Sigmoid colon (tissue), 7 donors: ENCODE measurements at regions of chr15 and their contacts with region 1.

Region 1: GRCh38 chr15:79028411-79028964 is 62.1 kb downstream of the RASGRF1 start:
- DNase-seq: no peak
- H3K4me3 ChIP-seq: no peak overlapping the region
- H3K27ac ChIP-seq: no peak overlapping the region
- H3K4me1 ChIP-seq: no peaks in the 10 kb centered on the region
- H3K27me3 ChIP-seq: peaks cover 0 to 6% (median 0%) of the 10 kb centered on the region in 3 donors
- CTCF ChIP-seq: peak; percentile 82 to 93 (median 88)
- EP300 ChIP-seq: no peak
- POLR2A ChIP-seq: no peak

Region 2: DNA sequence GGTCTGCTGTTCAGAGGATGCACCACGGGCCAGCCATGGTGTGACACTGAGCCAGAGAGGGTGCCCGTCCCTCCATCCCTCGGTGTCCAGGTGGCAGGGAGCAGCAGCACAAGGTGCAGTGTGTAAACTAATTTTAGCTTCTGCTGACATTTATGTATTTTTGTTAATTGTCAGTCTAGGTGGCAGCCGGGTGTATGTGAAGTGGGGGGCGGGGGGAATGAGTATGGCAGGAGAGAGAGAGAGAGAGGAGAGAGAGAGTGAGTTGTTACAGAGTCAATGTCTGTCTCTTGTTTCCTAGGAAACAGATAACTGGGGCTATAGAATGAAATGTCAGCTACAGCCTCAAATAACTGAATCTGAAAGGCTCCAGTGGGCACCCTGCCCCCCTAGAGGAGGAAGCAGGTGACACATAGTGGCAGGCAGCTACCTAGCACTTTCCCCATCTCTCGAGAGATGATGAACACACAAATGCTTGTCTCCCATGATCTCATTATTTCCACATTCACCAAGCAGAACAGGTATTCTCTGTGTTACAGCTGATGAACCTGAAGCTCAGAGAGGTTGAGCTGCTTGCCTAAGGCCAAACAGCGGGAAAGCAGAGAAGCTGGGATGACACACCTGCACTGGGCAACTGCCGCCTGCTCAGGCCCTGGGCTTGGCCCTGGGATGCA is 37.4 kb after region 1 on chr15:
- intact Hi-C with region 1: no loop called
- DNase-seq: peak; percentile 49
- H3K4me3 ChIP-seq: no peak overlapping the region
- H3K27ac ChIP-seq: peak overlapping the region in 3 of 4 donors; percentile 86 to 88 (median 86)
- H3K4me1 ChIP-seq: peaks cover 0 to 41% (median 27%) of the 10 kb centered on the region in 4 donors
- H3K27me3 ChIP-seq: no peaks in the 10 kb centered on the region
- CTCF ChIP-seq: no peak
- EP300 ChIP-seq: no peak
- POLR2A ChIP-seq: no peak

Region 3: DNA sequence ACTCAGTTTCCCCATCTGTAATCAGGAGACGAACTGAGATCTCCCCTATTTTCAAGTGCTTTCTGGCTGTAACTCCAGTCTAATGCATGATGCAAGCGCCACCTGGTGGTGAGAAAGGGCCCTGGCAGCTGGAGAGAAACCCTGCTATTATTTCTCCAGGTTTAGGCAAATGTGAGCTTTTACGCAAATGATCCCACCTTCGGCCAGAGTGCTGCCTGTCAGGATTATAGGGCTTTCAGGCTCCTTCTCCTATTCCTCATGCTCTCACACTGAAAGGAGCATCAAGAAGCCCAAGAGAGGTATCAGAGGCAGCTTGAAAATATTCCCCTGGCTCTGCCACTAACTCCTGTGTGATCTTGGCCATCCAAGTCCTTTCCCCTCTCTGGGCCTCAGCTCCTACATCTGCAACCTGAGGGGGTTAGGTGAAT is 156.0 kb after region 1 on chr15:
- intact Hi-C with region 1: loop called (anchors 1 kb)
- DNase-seq: peak; percentile 83
- H3K4me3 ChIP-seq: no peak overlapping the region
- H3K27ac ChIP-seq: no peak overlapping the region
- H3K4me1 ChIP-seq: no peaks in the 10 kb centered on the region
- H3K27me3 ChIP-seq: no peaks in the 10 kb centered on the region
- CTCF ChIP-seq: peak; percentile 88 to 98 (median 94)
- EP300 ChIP-seq: no peak
- POLR2A ChIP-seq: no peak